AG04450 (cell line): ENCODE measurements at regions of chr20 and their contacts with region 1.

Region 1: GRCh38 chr20:47125583-47126373 is 230.7 kb downstream of the ZMYND8 start:
- DNase-seq: no peak
- H3K4me3 ChIP-seq: no peak overlapping the region
- H3K27ac ChIP-seq: peak overlapping the region; percentile 40
- H3K27me3 ChIP-seq: no peaks in the 10 kb centered on the region
- CTCF ChIP-seq: no peak

Region 2: DNA sequence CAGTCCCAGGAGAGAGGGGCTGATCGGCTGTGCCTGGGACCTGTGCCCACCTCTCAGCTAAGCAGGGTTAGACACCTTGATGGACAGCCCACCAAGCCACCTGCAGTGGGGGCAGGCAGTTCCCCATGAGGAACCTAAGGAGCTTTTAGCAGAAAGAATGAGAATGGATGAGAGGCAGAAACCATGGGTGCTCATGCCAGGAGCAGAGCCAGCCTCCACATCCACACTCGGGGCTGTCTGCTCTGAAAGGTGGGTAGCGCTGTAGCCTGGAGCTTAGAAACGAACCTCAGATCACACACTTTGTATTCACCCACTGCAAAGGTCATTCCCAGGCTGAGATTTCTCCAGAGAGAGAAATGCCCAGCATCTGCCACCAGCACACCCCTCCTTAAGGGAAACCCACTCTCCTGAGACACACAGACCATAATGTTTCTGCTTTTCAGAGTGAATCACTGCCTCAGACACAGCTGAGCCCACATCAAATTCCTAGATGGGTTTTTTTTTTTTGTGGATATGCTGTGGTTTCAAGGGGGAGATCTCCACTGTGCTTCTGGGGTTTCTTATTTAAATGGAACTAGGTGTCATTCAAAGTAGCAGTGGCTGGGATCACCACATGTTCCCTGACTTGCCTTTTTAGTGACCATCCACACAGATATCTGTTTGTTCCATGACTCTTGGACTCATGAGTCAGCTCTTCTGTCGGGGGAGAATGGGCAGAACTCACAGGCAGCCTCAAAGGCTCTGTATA is 12.2 kb before region 1 on chr20:
- CTCF ChIA-PET with region 1: no interaction called
- POLR2A ChIA-PET with region 1: interaction called, 17 read pairs
- DNase-seq: no peak
- H3K4me3 ChIP-seq: no peak overlapping the region
- H3K27ac ChIP-seq: peak overlapping the region; percentile 73
- H3K27me3 ChIP-seq: no peaks in the 10 kb centered on the region
- CTCF ChIP-seq: no peak